Vagina (tissue), 2 donors: ENCODE measurements at regions of chr14 and their contacts with region 1.

Region 1: DNA sequence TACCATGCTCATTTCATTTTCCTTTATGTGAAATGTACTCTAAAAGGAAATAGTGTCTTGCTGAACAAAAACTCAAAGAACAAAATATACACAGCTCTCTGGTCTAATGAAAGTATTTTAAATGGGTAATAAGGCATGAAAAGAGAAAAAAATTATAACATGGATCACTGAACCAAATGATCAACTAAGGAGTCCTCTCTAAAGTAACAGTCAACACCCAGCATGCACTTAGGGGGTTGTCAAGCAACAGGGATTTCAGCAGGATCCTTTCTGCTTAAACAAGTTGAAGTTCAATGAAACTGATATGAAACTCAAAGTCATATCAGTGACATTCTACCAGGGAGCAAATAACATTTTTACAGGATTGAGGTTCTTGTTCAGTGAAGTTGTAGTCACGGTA is 398.8 kb downstream of the SEC23A start:
- DNase-seq: no peak
- H3K4me3 ChIP-seq: no peak overlapping the region
- H3K27ac ChIP-seq: no peak overlapping the region
- H3K4me1 ChIP-seq: no peaks in the 10 kb centered on the region
- H3K27me3 ChIP-seq: no peaks in the 10 kb centered on the region
- CTCF ChIP-seq: no peak
- POLR2A ChIP-seq: no peak

Region 2: DNA sequence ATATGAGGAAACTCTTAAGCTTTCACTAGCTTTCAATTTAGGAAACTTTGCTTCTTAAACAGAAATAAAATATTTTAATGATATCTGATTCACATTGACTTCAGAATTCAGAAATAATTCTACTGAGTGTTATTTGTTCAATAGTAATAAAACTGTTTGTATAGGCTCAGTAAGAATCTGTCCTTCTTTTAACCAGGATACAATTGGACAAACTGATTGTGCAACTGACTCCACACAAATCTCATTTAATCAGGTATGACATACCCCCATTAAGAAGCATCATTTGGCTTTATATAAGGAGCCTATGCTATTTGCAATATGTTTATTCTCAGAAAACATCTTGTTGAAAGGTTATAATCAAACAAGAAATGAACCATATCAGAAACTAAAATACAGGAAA is 787.9 kb before region 1 on chr14:
- intact Hi-C with region 1: loop called (anchors 5 kb)
- DNase-seq: no peak
- H3K4me3 ChIP-seq: no peak overlapping the region
- H3K27ac ChIP-seq: no peak overlapping the region
- H3K4me1 ChIP-seq: no peaks in the 10 kb centered on the region
- H3K27me3 ChIP-seq: no peaks in the 10 kb centered on the region
- CTCF ChIP-seq: no peak
- POLR2A ChIP-seq: no peak